ENCODE measurements at regions of chr9 and their contacts with region 1.

Region 1: GRCh38 chr9:82934952-82935351 is 128.0 kb downstream of the RASEF start:
- DNase-seq: peak; percentile 24
- H3K4me3 ChIP-seq: no peak overlapping the region
- H3K27ac ChIP-seq: peak overlapping the region; percentile 55
- H3K4me1 ChIP-seq: peaks cover 5% of the 10 kb centered on the region
- H3K27me3 ChIP-seq: no peaks in the 10 kb centered on the region
- CTCF ChIP-seq: no peak
- POLR2A ChIP-seq: no peak

Region 2: DNA sequence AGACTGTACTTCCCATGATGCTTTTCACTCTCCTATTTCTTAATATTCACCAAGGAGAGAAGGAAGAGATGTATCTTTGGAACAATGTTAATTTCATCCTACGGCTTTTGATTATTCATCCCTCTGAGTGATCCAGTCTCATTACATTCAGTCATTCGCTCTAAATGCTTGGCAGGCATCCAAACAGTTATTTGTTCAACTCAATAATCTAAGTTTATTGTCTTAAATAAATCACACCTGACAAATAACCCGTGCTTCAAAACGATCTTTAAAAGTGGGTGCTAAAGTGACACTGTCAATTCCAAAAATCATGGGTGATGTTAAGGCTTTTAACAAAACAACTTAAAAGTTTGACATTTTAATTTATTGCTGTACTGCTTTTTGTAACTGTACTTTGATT is 105.1 kb before region 1 on chr9:
- CTCF ChIA-PET with region 1: no interaction called
- POLR2A ChIA-PET with region 1: no interaction called
- dilution Hi-C with region 1: no loop called
- intact Hi-C with region 1: no loop called
- DNase-seq: no peak
- H3K4me3 ChIP-seq: no peak overlapping the region
- H3K27ac ChIP-seq: no peak overlapping the region
- H3K4me1 ChIP-seq: no peaks in the 10 kb centered on the region
- H3K27me3 ChIP-seq: no peaks in the 10 kb centered on the region
- CTCF ChIP-seq: no peak
- POLR2A ChIP-seq: no peak

Region 3: GRCh38 chr9:82882138-82882537 is 52.8 kb before region 1 on chr9:
- CTCF ChIA-PET with region 1: no interaction called
- POLR2A ChIA-PET with region 1: no interaction called
- dilution Hi-C with region 1: no loop called
- intact Hi-C with region 1: loop called (anchors 1 kb)
- DNase-seq: peak; percentile 24
- H3K4me3 ChIP-seq: no peak overlapping the region
- H3K27ac ChIP-seq: peak overlapping the region; percentile 64
- H3K4me1 ChIP-seq: peaks cover 24% of the 10 kb centered on the region
- H3K27me3 ChIP-seq: no peaks in the 10 kb centered on the region
- CTCF ChIP-seq: no peak
- POLR2A ChIP-seq: no peak

Measured in endothelial cell of umbilical vein (primary cell).